ENCODE measurements at regions of chr17 and their contacts with region 1.

Region 1: DNA sequence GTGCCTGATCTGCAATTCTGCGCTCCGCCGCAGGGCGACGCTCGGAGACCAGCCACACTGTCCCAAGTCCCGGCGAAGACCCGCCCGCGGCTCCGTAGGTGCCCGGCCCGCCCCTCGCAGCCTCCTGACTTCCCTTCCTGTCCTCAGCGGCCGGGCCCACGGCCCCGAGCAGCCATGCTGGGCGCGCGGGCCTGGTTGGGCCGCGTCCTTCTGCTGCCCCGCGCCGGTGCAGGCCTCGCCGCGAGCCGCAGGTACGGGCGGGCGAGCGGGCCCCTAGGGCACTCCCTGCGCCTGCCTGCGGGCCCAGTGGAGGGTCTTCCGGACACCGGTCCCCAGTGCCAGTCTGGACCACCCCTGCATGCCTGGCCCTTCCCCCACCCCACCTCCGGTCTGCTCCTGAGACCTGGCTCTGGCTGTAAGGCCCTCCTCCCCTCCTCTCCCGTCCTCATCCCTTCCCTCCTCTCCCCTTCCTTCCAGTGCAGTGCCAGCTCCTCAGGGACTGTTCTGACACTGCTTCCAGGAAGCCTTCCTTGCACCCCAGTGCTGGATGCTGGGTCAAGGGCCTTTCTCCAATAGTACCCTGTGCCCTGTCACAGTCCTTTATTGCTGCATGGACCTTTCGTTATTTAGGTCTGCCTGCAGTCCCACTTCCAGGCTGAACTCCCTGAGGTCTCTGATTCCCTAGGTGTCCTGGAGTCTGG is at the start of gene SPATA20:
- DNase-seq: peak; percentile 89 to 93
- ATAC-seq: peak; percentile 72 to 84
- H3K4me3 ChIP-seq: peak within 1 kb of the TSS; percentile 67
- H3K27ac ChIP-seq: peak within 1 kb of the TSS; percentile 95 to 98
- H3K4me1 ChIP-seq: peaks cover 50% of the 10 kb centered on the region
- CTCF ChIP-seq: peak; percentile 99
- EP300 ChIP-seq: no peak
- POLR2A ChIP-seq: peak; percentile 83
- RAD21 ChIP-seq: peak; percentile 99 to 100
- polyA plus RNA-seq, gene SPATA20: 34.4 and 48.5 TPM in 2 replicates

Region 2: GRCh38 chr17:50575581-50576210 is 28.5 kb after region 1 on chr17:
- CTCF ChIA-PET with region 1: interaction called, 24 read pairs
- POLR2A ChIA-PET with region 1: no interaction called
- DNase-seq: no peak
- ATAC-seq: peak; percentile 36 to 62; a peak in 4 of 6 replicates
- H3K4me3 ChIP-seq: no peak overlapping the region
- H3K27ac ChIP-seq: no peak overlapping the region
- H3K4me1 ChIP-seq: no peaks in the 10 kb centered on the region
- CTCF ChIP-seq: no peak
- EP300 ChIP-seq: no peak
- POLR2A ChIP-seq: no peak
- RAD21 ChIP-seq: no peak

Region 3: DNA sequence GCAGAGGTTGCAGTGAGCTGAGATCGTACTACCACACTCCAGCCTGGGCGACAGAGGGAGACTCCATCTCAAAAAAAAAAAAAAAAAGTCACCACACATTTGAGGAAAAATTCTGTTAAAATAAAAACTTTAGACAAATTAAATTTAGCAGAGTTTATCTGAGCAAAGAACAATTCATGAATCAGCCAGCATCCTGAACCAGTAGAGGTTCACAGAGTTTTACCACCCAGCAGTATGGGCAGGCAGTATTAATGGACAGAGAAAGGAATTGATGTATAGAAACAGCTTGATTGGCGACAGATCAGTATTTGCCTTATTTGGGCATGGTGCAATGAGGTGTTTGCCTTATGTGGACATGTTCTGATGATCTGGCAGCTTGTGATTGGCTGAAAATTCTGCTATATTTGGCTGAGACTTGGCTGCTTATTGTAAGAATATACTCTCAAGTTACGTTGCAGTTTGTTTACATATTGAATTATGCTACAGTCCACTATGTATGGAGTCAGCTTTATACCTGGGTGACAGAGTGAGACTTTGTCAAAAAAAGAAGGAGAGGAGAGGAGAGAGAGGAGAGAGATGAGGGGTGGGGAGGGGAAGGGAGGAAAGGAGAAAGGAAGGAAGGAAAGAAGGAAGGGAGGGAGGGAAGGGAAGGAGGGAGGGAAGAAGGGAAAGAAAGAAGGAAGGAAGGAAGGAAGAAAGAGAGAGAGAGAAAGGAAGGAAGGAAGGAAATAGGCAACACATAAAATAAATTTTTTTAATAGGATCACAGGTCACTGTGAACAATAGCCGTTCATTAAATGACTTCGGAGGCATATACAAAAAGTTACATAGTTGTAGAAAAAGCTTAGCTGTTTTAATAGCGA is 102.1 kb after region 1 on chr17:
- CTCF ChIA-PET with region 1: interaction called, 13 read pairs
- POLR2A ChIA-PET with region 1: interaction called, 3 read pairs
- DNase-seq: peak in 1 of 2 experiments; percentile 90
- ATAC-seq: peak; percentile 48 to 63; a peak in 5 of 6 replicates
- H3K4me3 ChIP-seq: no peak overlapping the region
- H3K27ac ChIP-seq: peak overlapping the region; percentile 51 to 99
- H3K4me1 ChIP-seq: peaks cover 95% of the 10 kb centered on the region
- CTCF ChIP-seq: no peak
- EP300 ChIP-seq: no peak
- POLR2A ChIP-seq: no peak
- RAD21 ChIP-seq: no peak

Region 4: DNA sequence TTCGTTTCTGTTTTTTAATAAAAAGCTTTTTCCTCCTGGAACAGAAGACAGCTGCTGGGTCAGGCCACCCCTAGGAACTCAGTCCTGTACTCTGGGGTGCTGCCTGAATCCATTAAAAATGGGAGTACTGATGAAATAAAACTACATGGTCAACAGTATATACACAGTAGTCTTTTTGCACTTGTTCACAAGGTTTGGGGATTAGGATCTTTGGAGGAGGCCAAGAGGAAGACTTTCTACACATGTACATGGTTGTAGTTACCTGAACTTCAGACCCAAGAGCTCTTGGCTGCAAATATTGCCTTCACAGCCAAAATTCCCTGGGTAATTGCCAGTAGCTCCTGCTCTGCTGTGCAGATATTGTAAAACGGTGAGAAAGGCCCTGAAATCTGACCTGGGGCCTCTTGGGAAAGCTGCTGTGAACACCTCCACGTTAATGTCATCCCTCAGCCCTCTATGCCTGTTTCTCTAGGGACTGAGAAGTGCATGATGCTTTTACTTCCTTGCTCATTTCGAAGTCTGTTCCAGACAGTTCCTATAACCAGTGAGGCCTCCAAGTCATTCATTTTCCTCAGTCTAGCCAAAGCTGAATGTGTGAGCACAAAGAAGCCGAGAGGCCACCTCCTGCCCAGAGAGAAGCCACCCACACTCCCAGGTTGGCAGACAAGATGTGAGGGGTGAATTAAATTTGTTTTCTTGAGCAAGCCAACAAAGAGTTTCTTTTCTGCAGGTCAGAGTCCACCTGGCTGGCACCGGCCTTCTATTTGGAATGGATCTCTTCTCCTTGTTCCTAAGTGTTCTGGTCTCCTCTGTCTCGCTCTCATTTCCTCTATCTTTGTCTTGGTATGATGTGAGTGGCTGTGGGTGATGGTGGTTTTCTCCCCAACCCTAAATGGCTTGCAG is 144.6 kb after region 1 on chr17:
- CTCF ChIA-PET with region 1: interaction called, 753 read pairs
- POLR2A ChIA-PET with region 1: interaction called, 22 read pairs
- DNase-seq: peak in 1 of 2 experiments; percentile 77
- ATAC-seq: peak in 1 of 2 experiments; percentile 2; a peak in 3 of 6 replicates
- H3K4me3 ChIP-seq: 0 out of 3 replicates have a peak overlapping the region, but pooled peaks have one; percentile 1
- H3K27ac ChIP-seq: peak overlapping the region; percentile 97 to 98
- H3K4me1 ChIP-seq: peaks cover 98% of the 10 kb centered on the region
- CTCF ChIP-seq: no peak
- EP300 ChIP-seq: no peak
- POLR2A ChIP-seq: no peak
- RAD21 ChIP-seq: no peak; a peak in 1 of 5 replicates

Region 5: GRCh38 chr17:50719144-50719923 is 172.1 kb after region 1 on chr17 and contains the start of gene LUC7L3:
- CTCF ChIA-PET with region 1: interaction called, 15 read pairs
- POLR2A ChIA-PET with region 1: interaction called, 13 read pairs
- DNase-seq: peak; percentile 95 to 98
- ATAC-seq: peak; percentile 92 to 95
- H3K4me3 ChIP-seq: peak within 1 kb of the TSS; percentile 66
- H3K27ac ChIP-seq: peak within 1 kb of the TSS; percentile 85 to 95
- H3K4me1 ChIP-seq: peaks cover 33% of the 10 kb centered on the region
- CTCF ChIP-seq: no peak
- EP300 ChIP-seq: no peak
- POLR2A ChIP-seq: peak; percentile 80
- RAD21 ChIP-seq: no peak
- polyA plus RNA-seq, gene LUC7L3: 117 and 209 TPM in 2 replicates